ENCODE measurements at regions of chr13 and their contacts with region 1.

Region 1: DNA sequence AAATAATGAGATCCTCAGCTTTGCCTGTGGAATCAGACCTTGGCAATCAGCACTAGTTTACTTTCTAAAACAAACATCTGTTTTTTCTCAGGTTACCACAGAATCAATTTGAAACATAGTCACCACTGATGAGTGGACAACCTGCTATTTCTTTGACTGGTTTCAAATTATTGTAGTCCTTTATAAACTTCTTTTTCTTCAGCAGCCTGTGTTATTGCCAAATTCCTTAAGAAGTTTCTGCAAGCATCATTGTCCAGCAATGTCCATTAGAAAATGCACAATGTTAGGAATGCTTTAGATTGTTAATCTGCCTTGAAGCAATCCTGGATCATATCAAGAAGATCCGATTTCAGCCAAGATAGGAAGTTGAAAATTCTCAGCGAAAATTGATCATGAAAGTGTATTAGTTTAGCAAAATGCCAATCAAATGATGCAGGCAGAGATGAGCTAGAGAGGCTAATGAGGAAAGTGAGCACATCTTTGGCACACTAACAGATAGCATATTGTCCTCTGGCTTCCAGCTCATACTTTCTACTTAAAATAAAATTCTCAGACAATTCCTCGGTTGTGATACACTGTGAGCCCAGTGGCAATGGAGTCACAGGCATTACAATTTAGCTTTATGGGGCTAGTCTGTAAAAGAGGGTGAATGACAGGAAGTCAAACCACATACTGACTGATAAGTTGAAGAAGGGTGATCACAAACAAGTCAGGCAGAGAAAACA is 270.6 kb downstream of the SLITRK6 start:
- DNase-seq: peak in 1 of 10 donors; percentile 14
- H3K4me3 ChIP-seq: peak overlapping the region in 36 of 59 donors; percentile 2 to 45 (median 24)
- H3K27ac ChIP-seq: peak overlapping the region in 36 of 59 donors; percentile 7 to 80 (median 48)
- H3K27me3 ChIP-seq: peaks cover 0 to 5% (median 0%) of the 10 kb centered on the region in 45 donors
- CTCF ChIP-seq: no peak

Region 2: GRCh38 chr13:85405316-85405897 is 123.2 kb before region 1 on chr13:
- intact Hi-C with region 1: loop called in 1 of 2 experiments (anchors 5 kb)
- DNase-seq: peak in 8 of 10 donors; percentile 20 to 59 (median 42)
- H3K4me3 ChIP-seq: peak overlapping the region in 19 of 59 donors; percentile 1 to 46 (median 25)
- H3K27ac ChIP-seq: peak overlapping the region in 58 of 59 donors; percentile 2 to 95 (median 88)
- H3K27me3 ChIP-seq: no peaks in the 10 kb centered on the region
- CTCF ChIP-seq: peak in 20 of 56 donors; percentile 3 to 44 (median 14)

Region 3: GRCh38 chr13:85590231-85590931 is 61.7 kb after region 1 on chr13:
- intact Hi-C with region 1: no loop called
- DNase-seq: no peak
- H3K4me3 ChIP-seq: no peak overlapping the region
- H3K27ac ChIP-seq: no peak overlapping the region
- H3K27me3 ChIP-seq: no peaks in the 10 kb centered on the region
- CTCF ChIP-seq: no peak

Region 4: GRCh38 chr13:85632526-85633195 is 104.0 kb after region 1 on chr13:
- intact Hi-C with region 1: loop called in 1 of 2 experiments (anchors 10 kb)
- DNase-seq: no peak
- H3K4me3 ChIP-seq: peak overlapping the region in 2 of 59 donors; percentile 10 to 24
- H3K27ac ChIP-seq: peak overlapping the region in 3 of 59 donors; percentile 43 to 61 (median 51)
- H3K27me3 ChIP-seq: no peaks in the 10 kb centered on the region
- CTCF ChIP-seq: no peak

Measured in dorsolateral prefrontal cortex (tissue), 120 donors.